Activated CD8-positive, alpha-beta T cell treated with anti-CD3 and anti-CD28 coated beads, Interleukin-2, amount 10 ng/mL, durations not matched to agents 7 days and 5 days (primary cell): ENCODE measurements at regions of chr2 and their contacts with region 1.

Region 1: GRCh38 chr2:172465417-172466334 is 38.3 kb downstream of the ITGA6 start:
- DNase-seq: peak; percentile 84
- ATAC-seq: no peak
- H3K4me3 Mint-ChIP-seq: no peak overlapping the region
- H3K27ac Mint-ChIP-seq: peak overlapping the region; percentile 60
- H3K4me1 Mint-ChIP-seq: peaks cover 61% of the 10 kb centered on the region
- H3K27me3 Mint-ChIP-seq: no peaks in the 10 kb centered on the region

Region 2: GRCh38 chr2:171703574-171704347 is 761.9 kb before region 1 on chr2:
- CTCF ChIA-PET with region 1: interaction called, 12 read pairs
- POLR2A ChIA-PET with region 1: no interaction called
- DNase-seq: peak; percentile 27
- ATAC-seq: no peak
- H3K4me3 Mint-ChIP-seq: no peak overlapping the region
- H3K27ac Mint-ChIP-seq: no peak overlapping the region
- H3K4me1 Mint-ChIP-seq: peaks cover 1% of the 10 kb centered on the region
- H3K27me3 Mint-ChIP-seq: no peaks in the 10 kb centered on the region

Region 3: GRCh38 chr2:172179045-172179701 is 286.5 kb before region 1 on chr2:
- CTCF ChIA-PET with region 1: interaction called, 67 read pairs
- POLR2A ChIA-PET with region 1: no interaction called
- DNase-seq: peak; percentile 47
- ATAC-seq: peak; percentile 64
- H3K4me3 Mint-ChIP-seq: no peak overlapping the region
- H3K27ac Mint-ChIP-seq: no peak overlapping the region
- H3K4me1 Mint-ChIP-seq: peaks cover 23% of the 10 kb centered on the region
- H3K27me3 Mint-ChIP-seq: no peaks in the 10 kb centered on the region

Region 4: GRCh38 chr2:172242961-172243360 is 222.7 kb before region 1 on chr2:
- CTCF ChIA-PET with region 1: interaction called, 12 read pairs
- POLR2A ChIA-PET with region 1: no interaction called
- DNase-seq: no peak
- ATAC-seq: no peak
- H3K4me3 Mint-ChIP-seq: no peak overlapping the region
- H3K27ac Mint-ChIP-seq: no peak overlapping the region
- H3K4me1 Mint-ChIP-seq: peaks cover 10% of the 10 kb centered on the region
- H3K27me3 Mint-ChIP-seq: peaks cover 15% of the 10 kb centered on the region

Region 5: DNA sequence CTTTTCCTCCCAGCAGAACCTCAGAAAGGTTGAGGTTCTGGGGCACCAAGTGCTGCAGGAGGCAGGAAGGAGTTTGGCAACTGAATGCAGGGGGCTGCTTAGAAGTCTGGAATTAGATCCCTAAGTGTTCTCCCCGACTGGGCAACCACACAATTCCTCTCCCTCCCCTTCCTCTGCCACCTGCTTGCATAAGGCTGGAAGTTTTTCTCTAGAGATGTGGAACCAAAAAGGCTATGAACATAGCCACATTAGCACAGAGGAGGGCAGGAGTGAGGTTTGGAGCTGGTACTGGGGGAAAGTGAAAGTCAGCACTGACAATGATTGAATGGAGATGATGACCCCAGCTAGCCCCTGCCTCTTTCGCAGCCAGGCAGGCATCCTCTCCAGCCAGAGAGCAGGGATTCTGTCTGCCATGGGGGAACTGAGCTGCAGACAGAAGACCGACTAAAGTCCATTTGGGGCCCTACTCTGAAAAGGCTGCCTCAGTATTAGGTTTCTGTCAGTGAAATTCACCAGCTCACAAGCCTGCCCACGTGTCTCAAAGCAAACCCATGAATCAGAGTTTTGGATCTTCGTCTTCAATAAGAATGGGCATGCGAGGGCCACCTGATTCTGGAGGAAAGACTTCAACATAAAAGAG is 126.2 kb before region 1 on chr2:
- CTCF ChIA-PET with region 1: interaction called, 26 read pairs
- POLR2A ChIA-PET with region 1: interaction called, 3 read pairs
- DNase-seq: peak; percentile 24
- ATAC-seq: peak; percentile 67
- H3K4me3 Mint-ChIP-seq: peak overlapping the region; percentile 46
- H3K27ac Mint-ChIP-seq: peak overlapping the region; percentile 61
- H3K4me1 Mint-ChIP-seq: peaks cover 19% of the 10 kb centered on the region
- H3K27me3 Mint-ChIP-seq: peaks cover 8% of the 10 kb centered on the region

Region 6: DNA sequence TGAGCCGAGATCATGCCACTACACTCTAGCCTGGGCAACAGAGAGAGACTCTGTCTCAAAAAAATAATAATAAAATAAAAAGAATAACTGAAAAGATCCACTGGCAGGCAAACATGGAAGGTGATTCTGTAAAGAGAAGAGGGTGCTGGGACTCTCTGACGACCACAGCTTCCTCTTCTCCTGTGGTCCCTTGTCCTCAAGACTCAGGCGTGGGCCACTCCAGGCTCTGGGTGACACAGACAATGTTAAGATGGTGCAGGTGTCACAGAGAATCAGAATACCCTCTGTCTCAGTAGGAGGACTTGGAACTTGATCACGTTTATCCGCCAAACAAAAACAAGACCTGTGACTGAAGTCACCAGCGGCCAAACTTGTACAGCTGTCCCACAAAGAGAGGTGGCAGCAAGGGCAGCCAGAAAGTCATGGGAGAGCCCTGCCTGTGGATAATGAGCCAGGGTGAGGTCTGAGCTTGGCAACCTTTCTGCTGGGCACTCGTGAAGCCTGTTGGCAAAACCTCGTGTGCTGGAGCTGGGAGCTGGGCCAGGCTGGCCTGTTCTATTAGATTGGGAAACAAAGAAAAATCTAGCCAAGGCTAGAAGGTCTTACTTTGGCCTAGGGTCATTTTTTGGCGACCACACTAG is 114.7 kb before region 1 on chr2:
- CTCF ChIA-PET with region 1: no interaction called
- POLR2A ChIA-PET with region 1: no interaction called
- DNase-seq: no peak
- ATAC-seq: no peak
- H3K4me3 Mint-ChIP-seq: no peak overlapping the region
- H3K27ac Mint-ChIP-seq: no peak overlapping the region
- H3K4me1 Mint-ChIP-seq: no peaks in the 10 kb centered on the region
- H3K27me3 Mint-ChIP-seq: peaks cover 6% of the 10 kb centered on the region

Region 7: DNA sequence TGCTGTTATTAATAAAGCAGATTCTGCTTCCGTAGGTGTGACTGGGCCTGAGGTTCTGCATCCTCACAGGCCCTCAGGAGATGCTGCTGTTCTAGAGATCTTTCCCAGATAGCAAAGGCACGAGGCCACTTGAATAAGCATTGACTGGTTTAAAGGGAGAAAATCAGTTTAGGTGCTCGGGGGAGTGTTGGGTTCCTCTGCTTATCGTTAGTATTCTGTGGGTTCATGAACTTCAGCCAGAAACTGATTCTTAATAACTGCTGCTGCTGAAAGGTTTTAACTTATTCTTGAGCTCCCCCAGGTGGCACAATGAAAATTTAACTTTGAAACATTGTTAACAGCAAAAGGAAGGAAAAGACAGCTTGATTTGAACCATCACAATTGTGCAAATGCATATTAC is 18.6 kb after region 1 on chr2:
- CTCF ChIA-PET with region 1: interaction called, 138 read pairs
- POLR2A ChIA-PET with region 1: no interaction called
- DNase-seq: no peak
- ATAC-seq: no peak
- H3K4me3 Mint-ChIP-seq: no peak overlapping the region
- H3K27ac Mint-ChIP-seq: peak overlapping the region; percentile 2
- H3K4me1 Mint-ChIP-seq: peaks cover 28% of the 10 kb centered on the region
- H3K27me3 Mint-ChIP-seq: no peaks in the 10 kb centered on the region

Region 8: DNA sequence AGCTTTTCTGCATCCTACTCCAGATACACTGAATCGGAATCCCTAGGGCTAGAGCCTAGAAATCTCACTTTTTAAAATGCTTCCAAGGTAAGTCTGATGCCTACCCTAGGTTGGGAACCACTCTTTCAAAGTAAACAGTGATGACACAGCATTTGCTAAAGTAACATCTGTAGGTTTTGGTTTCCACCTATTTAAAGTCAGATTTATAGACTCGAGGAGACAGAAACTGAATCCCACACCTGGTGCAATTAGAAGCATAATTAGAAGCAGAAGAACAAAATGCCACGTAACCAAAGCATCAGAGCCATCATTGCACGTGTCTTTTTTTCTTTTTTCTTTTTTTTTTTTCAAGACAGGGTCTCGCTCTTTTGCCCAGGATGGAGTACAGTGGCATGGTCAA is 131.1 kb after region 1 on chr2:
- CTCF ChIA-PET with region 1: no interaction called
- POLR2A ChIA-PET with region 1: no interaction called
- DNase-seq: no peak
- ATAC-seq: no peak
- H3K4me3 Mint-ChIP-seq: no peak overlapping the region
- H3K27ac Mint-ChIP-seq: no peak overlapping the region
- H3K4me1 Mint-ChIP-seq: no peaks in the 10 kb centered on the region
- H3K27me3 Mint-ChIP-seq: no peaks in the 10 kb centered on the region